ENCODE measurements at regions of chr6 and their contacts with region 1.

Region 1: GRCh38 chr6:144104898-144105487 is 9.6 kb upstream of the SF3B5 start:
- DNase-seq: no peak
- ATAC-seq: peak; percentile 87
- H3K4me3 ChIP-seq: no peak overlapping the region
- H3K27ac ChIP-seq: no peak overlapping the region
- H3K4me1 ChIP-seq: no peaks in the 10 kb centered on the region
- H3K27me3 ChIP-seq: no peaks in the 10 kb centered on the region
- CTCF ChIP-seq: peak; percentile 80

Region 2: GRCh38 chr6:144215932-144216667 is 111.1 kb after region 1 on chr6:
- intact Hi-C with region 1: loop called (anchors 10 kb)
- DNase-seq: peak; percentile 97
- ATAC-seq: peak; percentile 93
- H3K4me3 ChIP-seq: peak overlapping the region; percentile 77
- H3K27ac ChIP-seq: peak overlapping the region; percentile 99
- H3K4me1 ChIP-seq: peaks cover 16% of the 10 kb centered on the region
- H3K27me3 ChIP-seq: no peaks in the 10 kb centered on the region
- CTCF ChIP-seq: peak; percentile 66

Region 3: DNA sequence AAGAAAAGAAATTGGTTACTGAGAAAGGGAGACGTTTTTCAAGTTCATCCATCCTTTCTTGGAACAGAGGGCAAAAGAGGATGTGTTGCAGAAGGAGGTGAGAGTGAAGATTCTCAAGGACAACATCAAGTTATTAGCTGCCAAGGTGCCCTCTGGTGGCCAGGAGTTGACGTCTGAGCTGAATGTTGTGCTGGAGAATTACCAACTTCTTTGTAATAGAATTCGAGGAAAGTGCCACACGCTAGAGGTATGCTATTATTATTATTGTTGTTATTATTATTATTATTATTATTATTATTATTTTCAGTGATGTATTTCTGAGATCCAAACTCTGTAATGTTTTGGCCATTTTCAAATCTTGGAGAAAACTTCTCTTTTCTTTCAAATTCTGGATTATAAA is 377.1 kb after region 1 on chr6:
- intact Hi-C with region 1: loop called (anchors 10 kb)
- DNase-seq: peak; percentile 77
- ATAC-seq: peak; percentile 89
- H3K4me3 ChIP-seq: no peak overlapping the region
- H3K27ac ChIP-seq: no peak overlapping the region
- H3K4me1 ChIP-seq: peaks cover 13% of the 10 kb centered on the region
- H3K27me3 ChIP-seq: no peaks in the 10 kb centered on the region
- CTCF ChIP-seq: peak; percentile 64